Caco-2 (cell line): ENCODE measurements at regions of chr7 and their contacts with region 1.

Region 1: GRCh38 chr7:103660455-103661371 is 214.7 kb upstream of the SLC26A5 start:
- DNase-seq: peak; percentile 53 to 77
- H3K4me3 ChIP-seq: no peak overlapping the region
- H3K4me3 Mint-ChIP-seq: no peak overlapping the region
- H3K27ac Mint-ChIP-seq: peak overlapping the region; percentile 89
- H3K4me1 ChIP-seq: peaks cover 35% of the 10 kb centered on the region
- H3K4me1 Mint-ChIP-seq: peaks cover 22% of the 10 kb centered on the region
- H3K27me3 ChIP-seq: no peaks in the 10 kb centered on the region
- H3K27me3 Mint-ChIP-seq: no peaks in the 10 kb centered on the region
- CTCF ChIP-seq: no peak

Region 2: GRCh38 chr7:103613655-103614642 is 46.8 kb before region 1 on chr7:
- CTCF ChIA-PET with region 1: no interaction called
- POLR2A ChIA-PET with region 1: no interaction called
- intact Hi-C with region 1: loop called (anchors 2 kb)
- DNase-seq: peak; percentile 29 to 37
- H3K4me3 ChIP-seq: no peak overlapping the region
- H3K4me3 Mint-ChIP-seq: no peak overlapping the region
- H3K27ac Mint-ChIP-seq: peak overlapping the region; percentile 17
- H3K4me1 ChIP-seq: peaks cover 16% of the 10 kb centered on the region
- H3K4me1 Mint-ChIP-seq: peaks cover 8% of the 10 kb centered on the region
- H3K27me3 ChIP-seq: no peaks in the 10 kb centered on the region
- H3K27me3 Mint-ChIP-seq: no peaks in the 10 kb centered on the region
- CTCF ChIP-seq: peak in 1 of 2 experiments; percentile 8

Region 3: GRCh38 chr7:104089612-104090011 is 428.9 kb after region 1 on chr7:
- CTCF ChIA-PET with region 1: no interaction called
- POLR2A ChIA-PET with region 1: no interaction called
- intact Hi-C with region 1: loop called (anchors 1 kb)
- DNase-seq: peak; percentile 46 to 60
- H3K4me3 ChIP-seq: no peak overlapping the region
- H3K4me3 Mint-ChIP-seq: no peak overlapping the region
- H3K27ac Mint-ChIP-seq: peak overlapping the region; percentile 43
- H3K4me1 ChIP-seq: peaks cover 12% of the 10 kb centered on the region
- H3K4me1 Mint-ChIP-seq: peaks cover 19% of the 10 kb centered on the region
- H3K27me3 ChIP-seq: no peaks in the 10 kb centered on the region
- H3K27me3 Mint-ChIP-seq: no peaks in the 10 kb centered on the region
- CTCF ChIP-seq: no peak